ENCODE measurements at regions of chr2 and their contacts with region 1.

Region 1: GRCh38 chr2:161992526-161992925 is 81.5 kb downstream of the DPP4 start:
- DNase-seq: no peak
- ATAC-seq: peak; percentile 55
- H3K4me3 ChIP-seq: no peak overlapping the region
- H3K27ac ChIP-seq: no peak overlapping the region
- H3K4me1 ChIP-seq: peaks cover 6% of the 10 kb centered on the region
- H3K27me3 ChIP-seq: no peaks in the 10 kb centered on the region
- CTCF ChIP-seq: no peak
- POLR2A ChIP-seq: no peak
- RAD21 ChIP-seq: no peak

Region 2: GRCh38 chr2:162050513-162050961 is 58.0 kb after region 1 on chr2:
- CTCF ChIA-PET with region 1: no interaction called
- POLR2A ChIA-PET with region 1: no interaction called
- dilution Hi-C with region 1: no loop called
- in situ Hi-C with region 1: no loop called
- intact Hi-C with region 1: loop called (anchors 5 kb)
- DNase-seq: no peak
- ATAC-seq: no peak
- H3K4me3 ChIP-seq: no peak overlapping the region
- H3K27ac ChIP-seq: no peak overlapping the region
- H3K4me1 ChIP-seq: no peaks in the 10 kb centered on the region
- H3K27me3 ChIP-seq: no peaks in the 10 kb centered on the region
- CTCF ChIP-seq: no peak
- POLR2A ChIP-seq: no peak
- RAD21 ChIP-seq: no peak

Region 3: DNA sequence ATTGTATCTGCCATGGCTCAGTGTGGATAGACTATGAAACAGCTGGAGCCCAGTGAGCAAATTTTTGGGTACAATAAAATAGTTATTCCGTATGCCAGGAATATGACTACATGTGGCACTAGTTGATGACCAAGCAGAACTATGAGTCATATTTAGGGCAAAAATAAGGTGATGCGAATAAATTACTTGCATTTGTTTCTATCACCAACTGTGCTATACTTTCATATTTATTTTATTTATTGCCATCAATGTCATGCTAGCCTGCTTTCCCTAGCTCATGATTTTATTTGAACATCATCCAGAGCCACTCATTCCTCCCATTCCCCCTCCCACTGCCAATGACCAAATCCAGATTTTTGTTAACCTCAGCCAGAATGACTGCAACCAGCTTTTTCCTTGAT is 264.1 kb after region 1 on chr2:
- CTCF ChIA-PET with region 1: no interaction called
- POLR2A ChIA-PET with region 1: no interaction called
- dilution Hi-C with region 1: no loop called
- in situ Hi-C with region 1: no loop called
- intact Hi-C with region 1: no loop called
- DNase-seq: peak; percentile 37
- ATAC-seq: no peak
- H3K4me3 ChIP-seq: no peak overlapping the region
- H3K27ac ChIP-seq: no peak overlapping the region
- H3K4me1 ChIP-seq: peaks cover 4% of the 10 kb centered on the region
- H3K27me3 ChIP-seq: no peaks in the 10 kb centered on the region
- CTCF ChIP-seq: no peak
- POLR2A ChIP-seq: no peak
- RAD21 ChIP-seq: no peak

Region 4: GRCh38 chr2:162318328-162319180 is 326.0 kb after region 1 on chr2 and contains the start of gene IFIH1:
- CTCF ChIA-PET with region 1: no interaction called
- POLR2A ChIA-PET with region 1: no interaction called
- dilution Hi-C with region 1: no loop called
- in situ Hi-C with region 1: loop called (anchors 25 kb)
- intact Hi-C with region 1: no loop called
- DNase-seq: peak; percentile 89
- ATAC-seq: peak; percentile 97
- H3K4me3 ChIP-seq: peak within 1 kb of the TSS; percentile 70
- H3K27ac ChIP-seq: peak within 1 kb of the TSS; percentile 10; the same call in 1 of the 2 replicates
- H3K4me1 ChIP-seq: no peaks in the 10 kb centered on the region
- H3K27me3 ChIP-seq: no peaks in the 10 kb centered on the region
- CTCF ChIP-seq: peak; percentile 43
- POLR2A ChIP-seq: no peak
- RAD21 ChIP-seq: no peak
- total RNA-seq, gene IFIH1: 1.4 and 2.2 TPM in 2 replicates

Measured in IMR-90 (cell line).